Head of caudate nucleus (tissue), 42 donors: ENCODE measurements at regions of chr1 and their contacts with region 1.

Region 1: DNA sequence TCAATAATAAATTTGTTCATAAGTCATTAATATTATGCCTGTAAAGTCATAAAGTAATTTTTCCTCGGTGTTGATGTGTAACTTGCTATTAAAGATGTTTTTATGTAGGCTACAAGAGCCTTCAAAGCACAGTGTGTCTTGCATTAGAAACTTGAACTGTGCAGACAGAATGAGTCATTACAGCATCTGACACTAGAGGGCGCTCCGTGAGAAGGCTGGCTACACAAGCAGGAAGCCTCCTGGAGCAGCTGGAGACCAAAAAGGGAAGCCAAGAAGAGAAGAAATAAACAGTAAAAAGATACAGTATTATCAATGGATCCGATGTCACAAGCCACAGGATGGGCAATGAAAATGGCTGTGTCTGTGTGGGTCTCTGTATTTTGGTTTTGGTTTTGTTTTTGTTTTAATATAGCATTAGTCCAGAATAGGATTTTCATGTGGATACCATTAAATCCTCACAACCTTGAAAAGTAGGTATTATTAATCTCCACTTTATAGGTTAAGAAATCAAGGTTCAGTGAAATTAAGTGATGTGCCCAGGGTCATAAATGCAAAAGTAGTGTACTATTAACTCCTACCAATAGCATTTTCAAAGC is 16.1 kb upstream of the LRRC8D start:
- DNase-seq: peak; percentile 69 to 98 (median 93)

Region 2: GRCh38 chr1:89987170-89987819 is 182.6 kb after region 1 on chr1:
- intact Hi-C with region 1: loop called (anchors 1 kb)
- DNase-seq: peak in 30 of 42 donors; percentile 30 to 88 (median 70)